ENCODE measurements at regions of chr16 and their contacts with region 1.

Region 1: GRCh38 chr16:54286090-54286993 is at the start of gene IRX3:
- DNase-seq: peak; percentile 89 to 92
- ATAC-seq: peak; percentile 76 to 84 (median 80)
- H3K4me3 ChIP-seq: peak within 1 kb of the TSS; percentile 61 to 93 (median 73)
- H3K27ac ChIP-seq: peak within 1 kb of the TSS; percentile 84 to 98 (median 94)
- H3K4me1 ChIP-seq: peaks cover 0 to 54% (median 23%) of the 10 kb centered on the region in 9 donors
- H3K27me3 ChIP-seq: peaks cover 0 to 100% (median 48%) of the 10 kb centered on the region in 7 donors
- CTCF ChIP-seq: no peak
- total RNA-seq, gene IRX3: 24.7 to 85.7 (median 69.7) TPM

Region 2: DNA sequence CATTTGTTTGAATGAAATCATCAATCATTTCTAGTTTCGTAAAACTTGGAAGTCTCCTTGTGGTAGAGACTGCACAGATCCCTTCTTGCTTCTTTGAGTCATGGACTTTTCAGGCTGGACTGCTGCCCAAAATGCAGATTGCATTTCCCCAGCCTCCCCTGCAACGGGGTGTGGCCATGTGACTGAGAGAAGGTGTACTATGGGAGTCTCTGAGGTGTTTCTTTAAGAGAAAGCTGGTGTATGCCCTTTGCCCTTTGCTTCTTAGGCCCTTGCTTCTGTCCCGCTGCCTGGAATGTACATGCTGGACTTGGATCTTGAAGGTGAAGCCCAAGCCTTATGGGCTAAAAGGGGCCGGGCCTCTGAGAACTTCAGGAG is 530.8 kb before region 1 on chr16:
- intact Hi-C with region 1: no loop called
- DNase-seq: no peak
- ATAC-seq: peak in 4 of 8 donors; percentile 11 to 76 (median 36)
- H3K4me3 ChIP-seq: no peak overlapping the region
- H3K27ac ChIP-seq: no peak overlapping the region
- H3K4me1 ChIP-seq: peaks cover 0 to 29% (median 24%) of the 10 kb centered on the region in 9 donors
- H3K27me3 ChIP-seq: no peaks in the 10 kb centered on the region
- CTCF ChIP-seq: no peak

Region 3: DNA sequence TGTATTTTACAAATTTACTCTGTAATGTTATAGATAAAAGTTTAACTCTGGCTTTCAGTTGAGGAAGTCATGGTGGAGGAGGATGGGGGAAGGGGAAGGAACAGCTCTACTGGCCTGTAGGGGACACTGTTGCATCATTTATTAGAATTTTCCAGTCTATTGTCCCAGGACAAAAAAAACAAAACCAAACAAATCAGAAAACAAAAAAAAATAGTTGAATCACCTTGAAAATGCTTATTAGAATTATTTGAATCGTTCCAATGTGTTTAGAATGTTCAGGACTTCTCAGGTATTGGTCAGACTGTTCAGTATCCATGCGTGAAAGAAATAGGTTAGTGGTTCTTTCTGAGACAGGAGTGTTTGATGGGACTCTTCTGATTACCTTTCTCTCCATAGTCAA is 340.3 kb before region 1 on chr16:
- intact Hi-C with region 1: loop called in 2 of 10 experiments (anchors 10 kb)
- DNase-seq: no peak
- ATAC-seq: peak in 6 of 8 donors; percentile 60 to 79 (median 68)
- H3K4me3 ChIP-seq: no peak overlapping the region
- H3K27ac ChIP-seq: no peak overlapping the region
- H3K4me1 ChIP-seq: peaks cover 0 to 16% (median 0%) of the 10 kb centered on the region in 9 donors
- H3K27me3 ChIP-seq: no peaks in the 10 kb centered on the region
- CTCF ChIP-seq: peak; percentile 49 to 80 (median 73)

Region 4: DNA sequence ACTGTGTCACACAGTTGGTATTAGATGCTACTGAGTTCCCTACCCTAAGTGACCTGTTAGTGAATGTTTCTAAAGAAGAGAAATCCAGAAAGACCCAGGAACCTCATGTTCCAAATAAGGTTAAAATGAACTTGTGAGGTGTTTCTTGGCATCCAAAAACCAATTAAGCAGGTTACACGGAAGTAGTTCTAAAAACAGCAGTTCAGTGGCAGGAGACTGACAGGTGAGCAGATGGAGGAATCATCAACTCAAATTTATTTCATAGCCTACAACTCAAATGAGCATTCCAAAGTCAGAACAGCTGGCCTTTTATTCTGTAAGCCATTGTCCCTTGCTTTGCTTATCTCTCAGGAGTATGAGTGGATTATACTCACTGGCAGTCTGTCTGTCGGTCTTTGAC is 188.1 kb before region 1 on chr16:
- intact Hi-C with region 1: no loop called
- DNase-seq: no peak
- ATAC-seq: no peak
- H3K4me3 ChIP-seq: no peak overlapping the region
- H3K27ac ChIP-seq: no peak overlapping the region
- H3K4me1 ChIP-seq: no peaks in the 10 kb centered on the region
- H3K27me3 ChIP-seq: no peaks in the 10 kb centered on the region
- CTCF ChIP-seq: no peak

Region 5: DNA sequence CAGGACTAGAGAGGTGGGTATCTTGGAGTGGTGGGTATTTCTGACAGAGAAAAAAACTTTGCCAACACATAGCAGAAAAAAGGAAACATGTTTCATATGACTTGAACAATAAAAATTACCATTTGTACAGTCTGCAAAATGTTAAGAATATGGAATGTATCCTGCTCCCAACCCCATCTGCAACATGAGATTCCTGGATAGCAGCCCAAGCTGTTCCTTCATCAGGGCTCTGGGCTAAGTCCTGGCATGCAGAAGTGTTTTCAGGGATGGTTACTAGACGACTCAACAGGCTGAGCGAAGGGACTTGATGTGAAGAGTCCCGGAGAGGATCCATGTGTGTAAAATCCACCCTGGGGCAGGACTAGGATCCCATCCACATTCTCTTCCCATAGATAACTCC is 121.3 kb after region 1 on chr16:
- intact Hi-C with region 1: loop called in 4 of 10 experiments (anchors 5 to 10 kb)
- DNase-seq: no peak
- ATAC-seq: peak in 1 of 8 donors; percentile 58
- H3K4me3 ChIP-seq: no peak overlapping the region
- H3K27ac ChIP-seq: no peak overlapping the region
- H3K4me1 ChIP-seq: peaks cover 0 to 36% (median 8%) of the 10 kb centered on the region in 9 donors
- H3K27me3 ChIP-seq: no peaks in the 10 kb centered on the region
- CTCF ChIP-seq: no peak

Region 6: DNA sequence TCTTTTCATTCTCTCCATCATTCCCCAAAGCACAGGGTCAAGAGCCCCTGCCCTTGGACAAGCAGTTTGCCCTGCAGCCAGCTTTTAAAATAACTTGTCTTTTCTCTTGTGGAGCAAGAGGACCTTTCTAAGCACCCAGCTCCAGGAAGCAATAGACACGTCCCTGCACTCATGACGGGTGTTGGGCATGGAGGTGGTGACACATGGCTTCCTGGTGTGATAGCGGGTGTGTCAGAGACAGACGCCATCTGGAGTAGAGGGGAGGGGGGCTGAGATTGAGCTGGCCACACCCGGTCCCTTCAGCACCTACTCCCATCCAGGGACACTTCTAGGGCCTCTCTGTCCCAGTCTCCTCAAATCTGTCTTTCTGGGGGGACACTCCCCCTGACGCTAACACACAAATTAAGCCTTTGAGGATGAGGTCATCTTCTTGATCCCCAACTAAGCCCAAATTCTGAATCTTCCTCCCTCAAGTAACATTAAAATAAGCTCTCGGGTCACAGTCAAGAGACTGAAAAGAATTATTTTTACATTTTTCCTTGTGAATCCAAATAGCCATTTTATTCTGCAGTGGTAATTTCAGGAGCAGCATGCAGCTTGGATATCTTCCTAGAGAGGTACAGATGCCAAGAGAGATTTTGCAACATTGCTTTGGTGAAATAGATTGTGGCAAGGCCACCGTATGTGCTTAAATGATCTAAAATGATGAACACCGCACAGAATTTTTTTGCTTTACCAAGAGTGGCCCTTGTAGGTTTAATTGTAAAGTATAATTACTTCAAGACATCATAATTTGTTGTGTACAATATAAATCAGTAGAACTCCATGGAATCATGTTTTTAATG is 216.9 kb after region 1 on chr16:
- intact Hi-C with region 1: loop called in 6 of 10 experiments (anchors 1 to 10 kb)
- DNase-seq: peak; percentile 71 to 75
- ATAC-seq: peak; percentile 72 to 97 (median 88)
- H3K4me3 ChIP-seq: no peak overlapping the region
- H3K27ac ChIP-seq: peak overlapping the region; percentile 3 to 81 (median 63)
- H3K4me1 ChIP-seq: peaks cover 8 to 67% (median 47%) of the 10 kb centered on the region in 9 donors
- H3K27me3 ChIP-seq: no peaks in the 10 kb centered on the region
- CTCF ChIP-seq: no peak

Region 7: GRCh38 chr16:54812229-54812628 is 525.9 kb after region 1 on chr16:
- intact Hi-C with region 1: loop called in 8 of 10 experiments (anchors 2 to 10 kb)
- DNase-seq: no peak
- ATAC-seq: peak in 1 of 8 donors; percentile 59
- H3K4me3 ChIP-seq: no peak overlapping the region
- H3K27ac ChIP-seq: no peak overlapping the region
- H3K4me1 ChIP-seq: no peaks in the 10 kb centered on the region
- H3K27me3 ChIP-seq: no peaks in the 10 kb centered on the region
- CTCF ChIP-seq: peak in 6 of 9 donors; percentile 30 to 57 (median 48)

Region 8: DNA sequence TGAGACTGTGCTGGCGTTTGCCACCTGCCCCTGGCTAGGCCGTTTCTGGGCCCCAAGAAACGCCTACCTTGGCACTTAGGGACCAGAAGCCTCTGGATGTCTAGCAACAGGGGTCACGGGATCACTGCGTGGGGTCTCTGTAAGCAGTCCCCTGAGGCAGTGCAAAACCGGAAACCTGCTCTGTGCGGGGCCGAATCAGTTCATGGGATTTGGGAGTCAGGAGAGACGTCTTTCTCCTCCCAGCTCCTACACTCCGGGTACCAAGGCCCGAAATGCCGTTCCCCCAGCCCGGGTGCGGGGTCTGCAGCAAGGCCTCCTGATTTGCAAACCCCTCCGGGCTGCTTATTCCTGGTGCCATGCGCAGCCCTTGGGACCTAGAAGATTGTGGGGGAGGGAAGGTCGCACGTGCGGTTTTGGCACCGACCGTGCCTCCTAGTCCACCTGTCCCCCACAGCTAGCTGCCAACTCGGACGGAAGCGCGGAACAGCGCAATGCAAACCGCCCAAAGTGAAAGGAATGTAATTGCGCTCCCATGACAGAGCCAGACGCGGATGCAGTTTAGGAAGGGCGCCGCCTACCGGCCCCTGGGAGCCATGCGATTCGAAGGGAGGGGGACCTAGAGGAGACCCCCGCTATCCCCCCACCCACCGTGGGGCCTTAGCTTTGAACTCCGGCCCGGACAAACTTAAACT is 650.8 kb after region 1 on chr16:
- intact Hi-C with region 1: loop called in 4 of 10 experiments (anchors 5 to 10 kb)
- DNase-seq: peak; percentile 38 to 52
- ATAC-seq: peak; percentile 30 to 73 (median 58)
- H3K4me3 ChIP-seq: peak overlapping the region; percentile 17 to 90 (median 68)
- H3K27ac ChIP-seq: peak overlapping the region; percentile 14 to 96 (median 64)
- H3K4me1 ChIP-seq: peaks cover 3 to 46% (median 36%) of the 10 kb centered on the region in 9 donors
- H3K27me3 ChIP-seq: peaks cover 0 to 100% (median 88%) of the 10 kb centered on the region in 7 donors
- CTCF ChIP-seq: peak; percentile 36 to 73 (median 70)

Measured in heart right ventricle (tissue), 16 donors.